ENCODE measurements at regions of chr17 and their contacts with region 1.

Region 1: GRCh38 chr17:77957857-77958715 is at the start of gene TNRC6C:
- DNase-seq: peak; percentile 99 to 100 (median 100)
- ATAC-seq: peak; percentile 86
- H3K4me3 ChIP-seq: peak within 1 kb of the TSS; percentile 74 to 81
- H3K4me3 Mint-ChIP-seq: peak within 1 kb of the TSS; percentile 97
- H3K27ac ChIP-seq: peak within 1 kb of the TSS; percentile 57 to 79
- H3K27ac Mint-ChIP-seq: peak within 1 kb of the TSS; percentile 97
- H3K4me1 ChIP-seq: peaks cover 37% of the 10 kb centered on the region
- H3K4me1 Mint-ChIP-seq: peaks cover 38% of the 10 kb centered on the region
- H3K27me3 ChIP-seq: no peaks in the 10 kb centered on the region
- H3K27me3 Mint-ChIP-seq: no peaks in the 10 kb centered on the region
- CTCF ChIP-seq: no peak
- total RNA-seq, gene TNRC6C: 49.3 to 53.8 TPM

Region 2: GRCh38 chr17:76940738-76941350 is 1017.2 kb before region 1 on chr17:
- CTCF ChIA-PET with region 1: no interaction called
- POLR2A ChIA-PET with region 1: no interaction called
- intact Hi-C with region 1: no loop called
- DNase-seq: no peak
- ATAC-seq: no peak
- H3K4me3 ChIP-seq: no peak overlapping the region
- H3K4me3 Mint-ChIP-seq: no peak overlapping the region
- H3K27ac ChIP-seq: no peak overlapping the region
- H3K27ac Mint-ChIP-seq: no peak overlapping the region
- H3K4me1 ChIP-seq: no peaks in the 10 kb centered on the region
- H3K4me1 Mint-ChIP-seq: no peaks in the 10 kb centered on the region
- H3K27me3 ChIP-seq: peaks cover 0 to 3% of the 10 kb centered on the region in 2 experiments
- H3K27me3 Mint-ChIP-seq: no peaks in the 10 kb centered on the region
- CTCF ChIP-seq: no peak

Region 3: GRCh38 chr17:77444984-77445759 is 512.9 kb before region 1 on chr17:
- CTCF ChIA-PET with region 1: no interaction called
- POLR2A ChIA-PET with region 1: interaction called, 16 read pairs
- intact Hi-C with region 1: no loop called
- DNase-seq: peak; percentile 75 to 99 (median 85)
- ATAC-seq: peak; percentile 62
- H3K4me3 ChIP-seq: peak overlapping the region; percentile 32 to 38
- H3K4me3 Mint-ChIP-seq: peak overlapping the region; percentile 82
- H3K27ac ChIP-seq: peak overlapping the region; percentile 64 to 72
- H3K27ac Mint-ChIP-seq: peak overlapping the region; percentile 97
- H3K4me1 ChIP-seq: peaks cover 92% of the 10 kb centered on the region
- H3K4me1 Mint-ChIP-seq: peaks cover 90% of the 10 kb centered on the region
- H3K27me3 ChIP-seq: no peaks in the 10 kb centered on the region
- H3K27me3 Mint-ChIP-seq: no peaks in the 10 kb centered on the region
- CTCF ChIP-seq: no peak

Region 4: DNA sequence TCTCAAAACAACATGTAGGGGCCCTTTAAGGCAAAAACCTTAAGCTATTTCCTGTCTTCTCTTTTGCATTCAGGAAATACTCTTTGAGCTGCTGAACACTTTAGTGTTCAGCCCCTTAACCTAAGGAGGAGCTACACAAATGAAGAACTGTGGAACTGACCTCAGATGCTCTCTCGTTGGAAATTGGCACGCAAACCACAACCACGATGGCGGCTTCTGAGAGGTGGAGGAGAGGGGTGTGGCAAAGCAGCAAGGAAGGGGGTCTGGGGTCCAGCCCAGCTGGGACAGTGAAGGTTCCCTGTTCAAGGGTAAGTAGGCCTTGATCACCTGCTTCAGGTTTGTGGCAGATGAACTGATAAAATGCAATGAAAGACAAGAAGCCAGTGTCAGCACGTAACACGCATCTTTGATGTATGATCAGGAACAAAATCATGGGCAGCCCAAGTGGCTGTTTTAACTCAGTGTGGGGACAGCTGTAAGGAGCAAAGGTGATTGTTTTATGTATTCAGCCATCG is 291.1 kb before region 1 on chr17:
- CTCF ChIA-PET with region 1: no interaction called
- POLR2A ChIA-PET with region 1: interaction called, 36 read pairs
- intact Hi-C with region 1: loop called (anchors 1 to 5 kb)
- DNase-seq: peak; percentile 33 to 91 (median 71)
- ATAC-seq: peak; percentile 89
- H3K4me3 ChIP-seq: peak overlapping the region; percentile 47 to 53
- H3K4me3 Mint-ChIP-seq: peak overlapping the region; percentile 83
- H3K27ac ChIP-seq: peak overlapping the region; percentile 61 to 87
- H3K27ac Mint-ChIP-seq: peak overlapping the region; percentile 97
- H3K4me1 ChIP-seq: peaks cover 33% of the 10 kb centered on the region
- H3K4me1 Mint-ChIP-seq: peaks cover 58% of the 10 kb centered on the region
- H3K27me3 ChIP-seq: no peaks in the 10 kb centered on the region
- H3K27me3 Mint-ChIP-seq: no peaks in the 10 kb centered on the region
- CTCF ChIP-seq: no peak

Region 5: DNA sequence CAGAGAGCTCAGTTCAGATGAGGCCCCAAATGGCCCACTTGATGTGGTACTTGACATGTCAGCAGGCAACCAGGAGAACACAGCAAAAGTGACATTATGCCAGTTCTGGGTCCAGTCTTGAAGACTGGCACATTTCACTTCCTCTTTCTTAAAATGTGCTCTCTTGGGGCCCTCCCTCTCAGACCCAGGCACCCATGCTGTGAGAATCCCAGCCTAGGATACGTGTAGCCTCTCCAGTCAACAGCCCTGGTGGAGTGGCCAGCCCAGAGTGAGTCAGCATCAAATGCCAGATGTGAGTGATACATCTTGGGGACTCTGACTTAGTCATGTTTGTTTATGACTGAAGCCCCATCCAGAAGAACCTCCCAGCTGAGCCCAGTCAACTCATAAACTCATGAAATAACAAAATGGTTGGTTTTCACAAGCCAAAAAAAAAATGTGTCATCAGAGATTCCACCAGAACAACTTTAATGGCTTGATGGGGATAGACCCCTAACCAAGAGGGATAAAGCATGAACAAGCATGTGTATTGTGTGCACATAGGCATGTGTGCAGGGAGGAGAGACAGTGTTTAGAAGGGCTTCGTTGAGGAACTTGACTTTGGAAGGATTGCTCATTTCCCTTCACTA is 82.1 kb before region 1 on chr17:
- CTCF ChIA-PET with region 1: interaction called, 3 read pairs
- POLR2A ChIA-PET with region 1: interaction called, 138 read pairs
- intact Hi-C with region 1: no loop called
- DNase-seq: no peak
- ATAC-seq: no peak
- H3K4me3 ChIP-seq: no peak overlapping the region
- H3K4me3 Mint-ChIP-seq: peak overlapping the region; percentile 26
- H3K27ac ChIP-seq: no peak overlapping the region
- H3K27ac Mint-ChIP-seq: peak overlapping the region; percentile 32
- H3K4me1 ChIP-seq: peaks cover 97% of the 10 kb centered on the region
- H3K4me1 Mint-ChIP-seq: peaks cover 88% of the 10 kb centered on the region
- H3K27me3 ChIP-seq: no peaks in the 10 kb centered on the region
- H3K27me3 Mint-ChIP-seq: no peaks in the 10 kb centered on the region
- CTCF ChIP-seq: no peak

Region 6: DNA sequence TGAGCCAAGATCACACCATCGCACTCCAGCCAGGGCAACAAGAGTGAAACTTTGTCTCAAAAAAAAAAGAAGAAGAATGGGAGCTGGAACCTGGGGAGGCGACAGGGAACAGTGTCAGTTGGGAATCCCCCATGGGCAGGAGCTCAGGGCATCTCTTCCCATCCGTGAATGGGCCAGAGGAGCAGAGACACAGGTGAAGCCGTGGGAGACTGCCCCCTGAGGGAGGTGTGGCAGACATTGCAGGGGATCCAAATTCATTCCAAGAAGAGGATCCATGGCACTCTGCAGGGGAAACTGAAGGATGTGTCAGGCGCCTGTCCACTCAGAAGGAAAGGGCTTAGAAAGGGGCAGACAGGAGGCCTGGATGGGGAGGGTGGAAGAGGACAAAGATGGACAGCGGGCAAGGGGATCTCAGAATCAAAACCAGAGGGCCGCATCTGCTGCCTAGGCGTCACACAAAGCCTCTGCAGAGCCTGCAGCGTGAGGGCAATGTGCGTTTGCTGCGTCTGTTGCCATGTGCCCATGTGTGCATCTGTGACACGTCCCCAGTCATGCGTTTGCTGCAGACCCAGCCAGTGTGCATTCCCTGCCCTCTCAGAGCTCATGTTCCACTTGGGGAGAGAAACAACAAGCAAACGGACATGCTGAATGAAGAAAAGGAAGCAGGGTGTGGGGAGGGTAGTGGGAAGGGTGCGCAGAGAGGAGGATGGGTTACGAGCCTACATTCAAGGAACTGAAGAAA is 30.1 kb before region 1 on chr17:
- CTCF ChIA-PET with region 1: interaction called, 3 read pairs
- POLR2A ChIA-PET with region 1: interaction called, 10 read pairs
- intact Hi-C with region 1: no loop called
- DNase-seq: no peak
- ATAC-seq: no peak
- H3K4me3 ChIP-seq: no peak overlapping the region
- H3K4me3 Mint-ChIP-seq: no peak overlapping the region
- H3K27ac ChIP-seq: no peak overlapping the region
- H3K27ac Mint-ChIP-seq: peak overlapping the region; percentile 16
- H3K4me1 ChIP-seq: peaks cover 16% of the 10 kb centered on the region
- H3K4me1 Mint-ChIP-seq: peaks cover 19% of the 10 kb centered on the region
- H3K27me3 ChIP-seq: no peaks in the 10 kb centered on the region
- H3K27me3 Mint-ChIP-seq: no peaks in the 10 kb centered on the region
- CTCF ChIP-seq: no peak

Region 7: GRCh38 chr17:78013683-78014467 is 55.8 kb after region 1 on chr17:
- CTCF ChIA-PET with region 1: interaction called, 35 read pairs
- POLR2A ChIA-PET with region 1: interaction called, 24 read pairs
- intact Hi-C with region 1: loop called (anchors 2 kb)
- DNase-seq: peak; percentile 27 to 82 (median 53)
- ATAC-seq: peak; percentile 65
- H3K4me3 ChIP-seq: no peak overlapping the region
- H3K4me3 Mint-ChIP-seq: no peak overlapping the region
- H3K27ac ChIP-seq: peak overlapping the region in 1 of 2 experiments; percentile 30
- H3K27ac Mint-ChIP-seq: peak overlapping the region; percentile 46
- H3K4me1 ChIP-seq: peaks cover 12% of the 10 kb centered on the region
- H3K4me1 Mint-ChIP-seq: peaks cover 36% of the 10 kb centered on the region
- H3K27me3 ChIP-seq: no peaks in the 10 kb centered on the region
- H3K27me3 Mint-ChIP-seq: no peaks in the 10 kb centered on the region
- CTCF ChIP-seq: peak; percentile 82

Region 8: DNA sequence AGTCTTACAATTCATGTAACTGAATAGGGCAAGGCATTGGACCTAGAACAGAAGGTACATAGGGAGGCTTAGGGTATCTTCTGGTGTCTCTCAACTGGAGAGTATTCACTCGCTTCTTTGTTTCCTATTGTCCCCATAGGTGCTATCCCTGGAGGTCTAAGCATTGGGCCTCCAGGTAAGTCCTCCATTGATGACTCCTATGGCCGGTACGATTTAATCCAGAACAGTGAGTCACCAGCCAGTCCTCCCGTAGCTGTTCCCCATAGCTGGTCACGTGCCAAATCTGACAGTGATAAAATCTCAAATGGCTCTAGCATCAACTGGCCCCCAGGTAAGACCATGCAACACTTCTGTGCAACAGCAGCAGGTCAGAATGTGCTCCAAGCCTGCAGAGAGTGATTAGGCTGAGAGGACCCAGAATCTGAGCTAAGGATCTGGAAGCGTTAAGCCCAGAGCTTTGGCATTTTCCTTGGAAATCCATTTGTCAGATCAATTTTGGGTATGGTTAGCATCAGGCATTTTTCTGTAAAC is 134.8 kb after region 1 on chr17:
- CTCF ChIA-PET with region 1: no interaction called
- POLR2A ChIA-PET with region 1: no interaction called
- intact Hi-C with region 1: no loop called
- DNase-seq: no peak
- ATAC-seq: no peak
- H3K4me3 ChIP-seq: no peak overlapping the region
- H3K4me3 Mint-ChIP-seq: no peak overlapping the region
- H3K27ac ChIP-seq: no peak overlapping the region
- H3K27ac Mint-ChIP-seq: peak overlapping the region; percentile 32
- H3K4me1 ChIP-seq: no peaks in the 10 kb centered on the region
- H3K4me1 Mint-ChIP-seq: no peaks in the 10 kb centered on the region
- H3K27me3 ChIP-seq: no peaks in the 10 kb centered on the region
- H3K27me3 Mint-ChIP-seq: no peaks in the 10 kb centered on the region
- CTCF ChIP-seq: no peak